Activated T-helper 2 cell treated with anti-CD3 and anti-CD28 coated beads, Interferon-gamma antibody, Interleukin-2, Interleukin-4, amounts not matched to agents 10 μg/mL and 5 μg/mL and 100 μg/mL, durations not matched to agents 14 hours and 24 hours and 36 hours (primary cell): ENCODE measurements at regions of chr16 and their contacts with region 1.

Region 1: GRCh38 chr16:74606521-74607310 is at the start of gene GLG1:
- DNase-seq: peak; percentile 87
- H3K4me3 Mint-ChIP-seq: peak within 1 kb of the TSS; percentile 99
- H3K27ac Mint-ChIP-seq: peak within 1 kb of the TSS; percentile 85
- H3K4me1 Mint-ChIP-seq: peaks cover 55% of the 10 kb centered on the region
- H3K27me3 Mint-ChIP-seq: peaks cover 7% of the 10 kb centered on the region
- total RNA-seq, gene GLG1: 49.7 and 50.2 TPM in 2 replicates

Region 2: GRCh38 chr16:74372953-74373846 is 233.5 kb before region 1 on chr16:
- intact Hi-C with region 1: loop called (anchors 5 kb)
- DNase-seq: no peak
- H3K4me3 Mint-ChIP-seq: no peak overlapping the region
- H3K27ac Mint-ChIP-seq: no peak overlapping the region
- H3K4me1 Mint-ChIP-seq: peaks cover 2% of the 10 kb centered on the region
- H3K27me3 Mint-ChIP-seq: no peaks in the 10 kb centered on the region

Region 3: DNA sequence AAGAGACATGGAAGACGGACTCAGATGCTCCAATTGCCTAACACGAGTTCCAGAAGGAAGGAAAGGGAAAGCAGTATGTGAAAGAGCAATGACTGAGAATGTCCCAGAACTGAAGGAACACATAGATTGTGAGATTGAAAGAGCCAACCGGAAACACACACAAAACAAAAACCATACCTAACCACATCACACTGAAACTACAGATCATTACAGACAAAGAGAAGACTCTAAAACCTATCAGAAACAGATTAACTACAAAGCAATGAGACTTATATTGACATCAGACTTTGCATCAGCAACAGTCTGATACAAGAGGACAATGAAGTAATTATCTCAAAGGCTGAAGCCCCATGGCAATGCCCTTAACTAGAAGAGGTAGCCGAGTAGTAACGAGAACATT is 139.8 kb before region 1 on chr16:
- intact Hi-C with region 1: loop called (anchors 2 kb)
- DNase-seq: no peak
- H3K4me3 Mint-ChIP-seq: no peak overlapping the region
- H3K27ac Mint-ChIP-seq: no peak overlapping the region
- H3K4me1 Mint-ChIP-seq: peaks cover 22% of the 10 kb centered on the region
- H3K27me3 Mint-ChIP-seq: no peaks in the 10 kb centered on the region

Region 4: GRCh38 chr16:74563828-74564263 is 42.9 kb before region 1 on chr16:
- intact Hi-C with region 1: loop called (anchors 5 kb)
- DNase-seq: no peak
- H3K4me3 Mint-ChIP-seq: no peak overlapping the region
- H3K27ac Mint-ChIP-seq: no peak overlapping the region
- H3K4me1 Mint-ChIP-seq: peaks cover 35% of the 10 kb centered on the region
- H3K27me3 Mint-ChIP-seq: no peaks in the 10 kb centered on the region

Region 5: GRCh38 chr16:74626741-74627416 is 20.2 kb after region 1 on chr16:
- intact Hi-C with region 1: loop called (anchors 2 kb)
- DNase-seq: no peak
- H3K4me3 Mint-ChIP-seq: no peak overlapping the region
- H3K27ac Mint-ChIP-seq: peak overlapping the region; percentile 67
- H3K4me1 Mint-ChIP-seq: peaks cover 17% of the 10 kb centered on the region
- H3K27me3 Mint-ChIP-seq: no peaks in the 10 kb centered on the region

Region 6: GRCh38 chr16:74637742-74638453 is 31.2 kb after region 1 on chr16:
- intact Hi-C with region 1: no loop called
- DNase-seq: no peak
- H3K4me3 Mint-ChIP-seq: no peak overlapping the region
- H3K27ac Mint-ChIP-seq: no peak overlapping the region
- H3K4me1 Mint-ChIP-seq: peaks cover 3% of the 10 kb centered on the region
- H3K27me3 Mint-ChIP-seq: no peaks in the 10 kb centered on the region